ENCODE measurements at regions of chr1 and their contacts with region 1.

Region 1: GRCh38 chr1:182084487-182085316 is 23.2 kb upstream of the ZNF648 start:
- DNase-seq: peak; percentile 60 to 79 (median 75)
- ATAC-seq: peak; percentile 90
- H3K4me3 ChIP-seq: no peak overlapping the region
- H3K4me3 Mint-ChIP-seq: peak overlapping the region in 8 of 10 donors; percentile 8 to 45 (median 33)
- H3K27ac ChIP-seq: no peak overlapping the region
- H3K27ac Mint-ChIP-seq: peak overlapping the region; percentile 49 to 88 (median 83)
- H3K4me1 ChIP-seq: peaks cover 15 to 47% of the 10 kb centered on the region in 2 donors
- H3K4me1 Mint-ChIP-seq: peaks cover 27 to 54% (median 52%) of the 10 kb centered on the region in 7 donors
- H3K27me3 ChIP-seq: no peaks in the 10 kb centered on the region
- H3K27me3 Mint-ChIP-seq: no peaks in the 10 kb centered on the region

Region 2: DNA sequence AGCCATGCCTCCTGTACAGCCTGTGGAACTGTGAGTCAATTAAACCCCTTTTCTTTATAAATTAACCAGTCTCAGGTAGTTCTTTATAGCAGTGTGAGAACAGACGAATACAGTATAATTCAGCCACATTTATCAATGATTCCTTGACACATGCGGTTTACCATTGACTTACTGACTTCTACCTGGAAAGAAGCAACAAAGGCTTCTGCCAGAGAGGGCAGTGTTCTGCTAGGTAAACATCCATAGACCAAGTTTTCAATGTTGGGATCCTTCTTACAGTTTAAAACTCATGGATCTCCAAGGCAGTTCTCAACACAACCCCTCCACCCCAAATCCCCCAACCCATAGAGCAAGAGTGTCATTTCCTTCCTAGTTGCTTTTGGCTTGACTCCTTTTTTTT is 173.8 kb before region 1 on chr1:
- CTCF ChIA-PET with region 1: no interaction called
- POLR2A ChIA-PET with region 1: no interaction called
- intact Hi-C with region 1: no loop called
- DNase-seq: no peak
- ATAC-seq: no peak
- H3K4me3 ChIP-seq: no peak overlapping the region
- H3K4me3 Mint-ChIP-seq: no peak overlapping the region
- H3K27ac ChIP-seq: no peak overlapping the region
- H3K27ac Mint-ChIP-seq: no peak overlapping the region
- H3K4me1 ChIP-seq: no peaks in the 10 kb centered on the region
- H3K4me1 Mint-ChIP-seq: no peaks in the 10 kb centered on the region
- H3K27me3 ChIP-seq: no peaks in the 10 kb centered on the region
- H3K27me3 Mint-ChIP-seq: peaks cover 6 to 29% (median 22%) of the 10 kb centered on the region in 5 donors

Region 3: DNA sequence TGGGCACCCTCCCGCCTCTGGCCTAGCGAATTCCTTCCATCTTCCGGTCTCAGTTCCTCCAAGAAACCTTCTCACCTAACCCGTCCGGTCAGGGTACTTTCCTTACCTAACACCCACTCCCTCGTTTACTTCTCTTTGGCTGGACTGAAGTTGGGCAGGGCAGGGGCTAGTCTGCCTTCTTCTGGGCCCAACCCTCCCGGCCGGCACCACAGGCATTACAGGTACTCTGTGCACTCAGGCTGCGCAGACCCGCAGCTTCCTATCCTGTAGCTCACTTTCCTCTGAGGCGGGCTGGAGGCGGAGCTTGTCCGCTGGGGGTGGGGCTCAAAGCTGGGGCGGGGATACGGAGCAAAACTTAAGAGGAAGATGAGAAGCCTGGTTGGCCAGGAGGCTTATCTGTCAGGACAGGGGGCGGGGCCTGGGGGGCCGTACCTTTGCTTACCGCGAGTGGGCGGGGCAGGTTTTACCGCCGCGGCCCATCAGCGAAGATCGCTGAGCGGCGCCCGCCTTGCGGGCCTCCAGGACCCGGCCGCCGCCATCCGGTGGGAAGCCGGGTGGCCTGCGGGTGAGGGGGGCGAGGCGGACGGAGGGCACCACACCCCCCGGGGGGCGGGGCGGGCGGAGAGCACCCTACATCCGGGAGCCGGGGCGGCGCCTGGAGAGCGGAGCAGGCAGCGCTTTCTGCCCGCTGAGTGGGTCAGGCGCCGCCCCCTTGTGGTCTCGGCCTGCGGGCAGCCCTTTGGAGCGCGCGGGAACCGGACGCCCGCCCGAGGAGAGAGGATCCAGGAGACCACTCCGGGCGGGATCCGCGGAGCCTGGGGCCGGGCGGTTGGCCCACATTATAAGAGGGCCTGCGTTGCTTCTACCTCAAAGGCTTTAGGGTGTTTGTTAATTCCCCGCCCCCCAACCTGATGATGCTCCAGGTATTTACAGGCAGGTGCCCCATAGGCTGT is 55.0 kb before region 1 on chr1:
- CTCF ChIA-PET with region 1: interaction called, 3 read pairs
- POLR2A ChIA-PET with region 1: interaction called, 7 read pairs
- intact Hi-C with region 1: loop called (anchors 1 to 2 kb)
- DNase-seq: peak; percentile 95 to 98 (median 98)
- ATAC-seq: peak; percentile 97
- H3K4me3 ChIP-seq: peak overlapping the region; percentile 72
- H3K4me3 Mint-ChIP-seq: peak overlapping the region; percentile 90 to 100 (median 96)
- H3K27ac ChIP-seq: peak overlapping the region; percentile 87
- H3K27ac Mint-ChIP-seq: peak overlapping the region; percentile 94 to 100 (median 99)
- H3K4me1 ChIP-seq: peaks cover 9 to 14% of the 10 kb centered on the region in 2 donors
- H3K4me1 Mint-ChIP-seq: peaks cover 12 to 21% (median 18%) of the 10 kb centered on the region in 7 donors
- H3K27me3 ChIP-seq: no peaks in the 10 kb centered on the region
- H3K27me3 Mint-ChIP-seq: peaks cover 0 to 6% (median 0%) of the 10 kb centered on the region in 5 donors

Region 4: DNA sequence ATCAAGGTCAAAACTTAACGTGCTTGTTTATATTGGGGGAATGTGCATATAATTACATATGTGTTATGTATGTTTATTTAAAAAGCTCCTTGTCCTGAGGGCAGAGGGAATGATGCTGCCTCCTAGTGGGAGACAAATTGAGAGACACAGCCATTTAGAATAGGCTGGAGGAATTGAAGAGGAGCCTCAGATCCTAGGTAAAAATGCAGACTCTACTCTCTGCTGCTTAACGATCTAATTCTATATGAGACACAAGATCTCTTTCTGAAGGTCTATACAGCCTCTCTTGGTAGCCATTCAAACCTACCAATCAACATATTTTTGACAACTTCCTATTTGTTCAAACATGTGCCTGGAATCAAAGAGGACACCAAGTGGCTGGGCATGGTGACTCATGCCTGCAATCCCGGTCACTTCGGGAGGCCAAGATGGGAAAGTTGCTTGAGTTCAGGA is 113.4 kb after region 1 on chr1:
- CTCF ChIA-PET with region 1: interaction called, 7 read pairs
- POLR2A ChIA-PET with region 1: no interaction called
- intact Hi-C with region 1: loop called (anchors 1 kb)
- DNase-seq: no peak
- ATAC-seq: no peak
- H3K4me3 ChIP-seq: no peak overlapping the region
- H3K4me3 Mint-ChIP-seq: no peak overlapping the region
- H3K27ac ChIP-seq: no peak overlapping the region
- H3K27ac Mint-ChIP-seq: no peak overlapping the region
- H3K4me1 ChIP-seq: no peaks in the 10 kb centered on the region
- H3K4me1 Mint-ChIP-seq: peaks cover 0 to under 1% (median 0%) of the 10 kb centered on the region in 7 donors
- H3K27me3 ChIP-seq: no peaks in the 10 kb centered on the region
- H3K27me3 Mint-ChIP-seq: peaks cover 0 to 12% (median 5%) of the 10 kb centered on the region in 5 donors

Region 5: DNA sequence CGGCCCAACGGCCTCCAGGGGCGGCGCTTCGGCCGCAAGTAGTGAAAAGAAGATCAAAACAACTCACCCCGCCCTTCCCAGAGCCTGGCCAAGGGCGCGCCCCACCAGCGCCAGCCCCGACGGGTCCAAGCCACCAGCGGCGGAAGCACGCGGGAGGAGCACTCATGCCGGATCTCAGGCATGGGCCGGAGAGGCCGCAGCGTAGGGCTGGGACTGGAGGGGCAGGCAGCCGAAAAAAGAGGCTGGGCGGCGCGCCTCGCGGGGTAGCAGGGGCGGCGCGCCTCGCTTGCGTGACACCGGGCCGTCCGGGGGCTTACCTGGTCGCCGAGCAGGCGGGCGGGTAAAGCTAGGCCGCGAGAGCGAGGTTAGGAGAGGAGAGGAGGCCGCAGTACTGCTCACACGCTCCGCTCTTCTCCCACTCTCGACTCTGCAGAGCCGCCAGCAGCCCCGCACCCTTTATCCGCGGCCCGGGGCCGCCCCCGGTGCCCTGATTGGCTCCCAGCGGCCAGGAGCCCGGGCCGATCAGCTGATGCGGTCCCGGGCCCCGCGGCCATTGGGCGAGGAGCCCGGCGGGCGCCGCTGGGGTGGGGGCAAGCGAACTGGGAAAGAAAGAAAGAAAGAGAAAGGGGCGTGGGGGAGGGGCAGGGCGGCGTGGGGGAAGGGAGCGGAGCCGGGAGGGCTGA is 306.8 kb after region 1 on chr1 and contains the start of gene GLUL:
- CTCF ChIA-PET with region 1: interaction called, 230 read pairs
- POLR2A ChIA-PET with region 1: interaction called, 14 read pairs
- intact Hi-C with region 1: loop called (anchors 1 kb)
- DNase-seq: peak; percentile 46 to 83 (median 63)
- ATAC-seq: peak; percentile 87
- H3K4me3 ChIP-seq: peak within 1 kb of the TSS; percentile 73
- H3K4me3 Mint-ChIP-seq: peak within 1 kb of the TSS; percentile 87 to 98 (median 94)
- H3K27ac ChIP-seq: peak within 1 kb of the TSS; percentile 64
- H3K27ac Mint-ChIP-seq: peak within 1 kb of the TSS; percentile 82 to 97 (median 89)
- H3K4me1 ChIP-seq: peaks cover 10 to 14% of the 10 kb centered on the region in 2 donors
- H3K4me1 Mint-ChIP-seq: peaks cover 17 to 45% (median 29%) of the 10 kb centered on the region in 7 donors
- H3K27me3 ChIP-seq: no peaks in the 10 kb centered on the region
- H3K27me3 Mint-ChIP-seq: peaks cover 0 to 25% (median 0%) of the 10 kb centered on the region in 5 donors
- total RNA-seq, gene GLUL: 66.2 to 357 (median 112) TPM

Region 6: GRCh38 chr1:182595641-182596240 is 511.0 kb after region 1 on chr1:
- CTCF ChIA-PET with region 1: interaction called, 7 read pairs
- POLR2A ChIA-PET with region 1: interaction called, 3 read pairs
- intact Hi-C with region 1: loop called (anchors 2 to 5 kb)
- DNase-seq: peak in 8 of 9 donors; percentile 27 to 65 (median 45)
- ATAC-seq: peak; percentile 88
- H3K4me3 ChIP-seq: no peak overlapping the region
- H3K4me3 Mint-ChIP-seq: no peak overlapping the region
- H3K27ac ChIP-seq: no peak overlapping the region
- H3K27ac Mint-ChIP-seq: no peak overlapping the region
- H3K4me1 ChIP-seq: no peaks in the 10 kb centered on the region
- H3K4me1 Mint-ChIP-seq: peaks cover 0 to 11% (median 0%) of the 10 kb centered on the region in 7 donors
- H3K27me3 ChIP-seq: no peaks in the 10 kb centered on the region
- H3K27me3 Mint-ChIP-seq: peaks cover 0 to 18% (median 0%) of the 10 kb centered on the region in 5 donors

Region 7: GRCh38 chr1:182789138-182790076 is 704.7 kb after region 1 on chr1 and contains the start of gene NPL:
- CTCF ChIA-PET with region 1: interaction called, 3 read pairs
- POLR2A ChIA-PET with region 1: no interaction called
- intact Hi-C with region 1: loop called (anchors 1 kb)
- DNase-seq: peak; percentile 78 to 88 (median 86)
- ATAC-seq: peak; percentile 97
- H3K4me3 ChIP-seq: peak within 1 kb of the TSS; percentile 94
- H3K4me3 Mint-ChIP-seq: peak within 1 kb of the TSS; percentile 88 to 96 (median 94)
- H3K27ac ChIP-seq: peak within 1 kb of the TSS; percentile 68
- H3K27ac Mint-ChIP-seq: peak within 1 kb of the TSS; percentile 45 to 94 (median 87)
- H3K4me1 ChIP-seq: peaks cover 8 to 13% of the 10 kb centered on the region in 2 donors
- H3K4me1 Mint-ChIP-seq: peaks cover 8 to 18% (median 15%) of the 10 kb centered on the region in 7 donors
- H3K27me3 ChIP-seq: no peaks in the 10 kb centered on the region
- H3K27me3 Mint-ChIP-seq: peaks cover 0 to 38% (median 0%) of the 10 kb centered on the region in 5 donors
- total RNA-seq, gene NPL: 3.0 to 20.8 (median 9.9) TPM

Measured in naive thymus-derived CD4-positive, alpha-beta T cell (primary cell).